CD8-positive, alpha-beta T cell (primary cell): ENCODE measurements at regions of chr7 and their contacts with region 1.

Region 1: DNA sequence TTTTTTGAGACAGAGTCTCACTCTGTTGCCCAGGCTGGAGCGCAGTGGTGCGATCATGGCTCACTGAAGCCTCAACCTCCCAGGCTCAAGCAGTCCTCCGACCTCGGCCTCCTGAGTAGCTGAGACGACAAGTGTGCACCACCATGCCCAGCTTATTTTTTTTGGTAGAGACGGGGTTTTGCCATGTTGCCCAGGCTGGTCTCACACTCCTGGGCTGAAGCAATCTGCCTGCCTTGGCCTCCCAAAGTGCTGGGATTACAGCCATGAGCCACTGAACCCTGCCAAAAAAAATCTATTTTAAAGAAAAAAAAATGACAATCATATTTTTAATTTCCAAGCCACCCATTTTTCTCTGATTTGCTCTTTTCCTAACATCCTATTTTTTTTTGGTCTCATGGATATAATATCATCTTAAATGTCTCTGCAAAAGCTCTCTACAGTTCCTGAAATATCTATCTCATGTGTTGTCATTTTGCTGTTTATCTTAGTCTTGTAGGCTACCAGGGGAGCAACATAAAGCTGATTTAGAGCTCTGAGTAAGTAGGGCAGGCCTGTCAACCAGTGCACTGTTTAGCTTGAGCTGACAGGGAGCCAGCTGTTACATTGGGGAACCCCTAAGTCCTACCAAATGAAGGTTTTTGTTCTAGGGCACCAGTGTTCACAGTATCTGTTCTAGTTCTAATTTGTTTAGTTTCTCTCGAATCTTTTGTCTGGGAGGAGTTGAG is 29.9 kb upstream of the HBP1 start:
- DNase-seq: no peak
- ATAC-seq: no peak
- H3K4me3 ChIP-seq: no peak overlapping the region
- H3K4me3 Mint-ChIP-seq: no peak overlapping the region
- H3K27ac ChIP-seq: no peak overlapping the region
- H3K27ac Mint-ChIP-seq: no peak overlapping the region
- H3K4me1 ChIP-seq: no peaks in the 10 kb centered on the region
- H3K4me1 Mint-ChIP-seq: no peaks in the 10 kb centered on the region
- H3K27me3 ChIP-seq: no peaks in the 10 kb centered on the region
- H3K27me3 Mint-ChIP-seq: no peaks in the 10 kb centered on the region
- CTCF ChIP-seq: no peak

Region 2: DNA sequence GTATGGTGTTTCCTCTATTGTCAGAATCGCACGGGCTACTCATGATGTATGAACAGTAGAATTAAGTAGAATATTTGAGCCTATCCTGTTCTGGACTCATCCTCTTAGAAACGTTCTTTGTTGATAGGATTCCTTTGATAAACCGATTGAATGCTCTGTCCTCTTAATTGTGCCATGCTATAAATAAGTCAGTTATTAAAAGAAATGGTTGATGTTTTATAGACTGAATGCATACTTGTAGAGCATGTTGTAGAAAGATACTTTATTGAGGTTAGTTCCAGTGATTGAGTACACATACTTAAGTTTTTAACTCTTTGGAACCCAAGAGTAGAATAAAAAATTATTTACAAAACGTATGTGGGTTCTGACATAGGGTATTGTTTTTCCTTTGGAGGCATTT is 25.0 kb before region 1 on chr7:
- CTCF ChIA-PET with region 1: no interaction called
- POLR2A ChIA-PET with region 1: no interaction called
- intact Hi-C with region 1: loop called in 1 of 2 experiments (anchors 1 kb)
- DNase-seq: no peak
- ATAC-seq: no peak
- H3K4me3 ChIP-seq: no peak overlapping the region
- H3K4me3 Mint-ChIP-seq: no peak overlapping the region
- H3K27ac ChIP-seq: no peak overlapping the region
- H3K27ac Mint-ChIP-seq: no peak overlapping the region
- H3K4me1 ChIP-seq: no peaks in the 10 kb centered on the region
- H3K4me1 Mint-ChIP-seq: no peaks in the 10 kb centered on the region
- H3K27me3 ChIP-seq: no peaks in the 10 kb centered on the region
- H3K27me3 Mint-ChIP-seq: no peaks in the 10 kb centered on the region
- CTCF ChIP-seq: no peak